Activated CD4-positive, alpha-beta T cell treated with anti-CD3 and anti-CD28 coated beads for 36 hours (primary cell): ENCODE measurements at regions of chrX and their contacts with region 1.

Region 1: GRCh38 chrX:39772057-39772832 is 325.5 kb downstream of the BCOR start:
- DNase-seq: peak; percentile 84
- ATAC-seq: peak; percentile 71
- H3K4me3 Mint-ChIP-seq: peak overlapping the region; percentile 39
- H3K27ac Mint-ChIP-seq: peak overlapping the region; percentile 94
- H3K4me1 Mint-ChIP-seq: peaks cover 42% of the 10 kb centered on the region
- H3K27me3 Mint-ChIP-seq: no peaks in the 10 kb centered on the region

Region 2: GRCh38 chrX:39320165-39320564 is 452.1 kb before region 1 on chrX:
- CTCF ChIA-PET with region 1: no interaction called
- POLR2A ChIA-PET with region 1: no interaction called
- intact Hi-C with region 1: loop called in 1 of 2 experiments (anchors 5 kb)
- DNase-seq: no peak
- ATAC-seq: peak; percentile 70
- H3K4me3 Mint-ChIP-seq: no peak overlapping the region
- H3K27ac Mint-ChIP-seq: peak overlapping the region; percentile 67
- H3K4me1 Mint-ChIP-seq: peaks cover 65% of the 10 kb centered on the region
- H3K27me3 Mint-ChIP-seq: no peaks in the 10 kb centered on the region

Region 3: GRCh38 chrX:39613482-39613921 is 158.7 kb before region 1 on chrX:
- CTCF ChIA-PET with region 1: no interaction called
- POLR2A ChIA-PET with region 1: no interaction called
- intact Hi-C with region 1: loop called in 1 of 2 experiments (anchors 2 kb)
- DNase-seq: peak; percentile 47
- ATAC-seq: peak; percentile 30
- H3K4me3 Mint-ChIP-seq: peak overlapping the region; percentile 77
- H3K27ac Mint-ChIP-seq: peak overlapping the region; percentile 89
- H3K4me1 Mint-ChIP-seq: peaks cover 33% of the 10 kb centered on the region
- H3K27me3 Mint-ChIP-seq: no peaks in the 10 kb centered on the region

Region 4: DNA sequence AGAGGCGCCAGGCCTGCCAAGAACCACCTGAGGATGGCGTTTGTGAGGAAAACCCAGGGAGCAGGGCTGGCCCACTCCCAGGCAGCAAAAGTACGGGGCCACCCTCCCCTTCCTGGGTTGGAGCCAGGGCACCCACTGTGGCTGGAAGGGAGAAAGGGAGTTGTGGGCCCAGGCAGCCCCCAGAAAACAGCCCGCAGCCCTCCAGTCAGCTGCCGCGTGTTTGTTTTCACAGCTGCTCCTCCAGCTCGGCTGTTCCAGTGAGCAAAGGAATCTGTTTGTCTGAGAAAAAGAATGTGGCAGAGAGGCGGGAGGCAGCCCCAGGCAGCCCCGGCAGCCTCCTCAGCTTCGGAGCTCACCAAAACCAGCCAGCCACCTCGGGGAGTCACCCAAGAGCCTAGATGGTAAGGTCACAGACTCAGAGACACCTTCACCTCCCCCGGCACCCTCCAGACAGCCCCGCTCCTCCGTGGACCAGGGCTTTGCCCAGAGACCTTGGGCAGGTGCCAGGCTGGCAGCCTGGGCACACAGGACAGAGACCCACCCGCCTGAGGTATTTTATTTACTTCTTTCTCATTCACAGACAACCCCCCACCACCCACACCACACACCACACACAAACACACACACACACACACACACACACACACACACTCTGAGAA is 12.6 kb before region 1 on chrX:
- CTCF ChIA-PET with region 1: no interaction called
- POLR2A ChIA-PET with region 1: no interaction called
- intact Hi-C with region 1: loop called in 1 of 2 experiments (anchors 2 kb)
- DNase-seq: no peak
- ATAC-seq: no peak
- H3K4me3 Mint-ChIP-seq: no peak overlapping the region
- H3K27ac Mint-ChIP-seq: no peak overlapping the region
- H3K4me1 Mint-ChIP-seq: peaks cover 18% of the 10 kb centered on the region
- H3K27me3 Mint-ChIP-seq: no peaks in the 10 kb centered on the region

Region 5: DNA sequence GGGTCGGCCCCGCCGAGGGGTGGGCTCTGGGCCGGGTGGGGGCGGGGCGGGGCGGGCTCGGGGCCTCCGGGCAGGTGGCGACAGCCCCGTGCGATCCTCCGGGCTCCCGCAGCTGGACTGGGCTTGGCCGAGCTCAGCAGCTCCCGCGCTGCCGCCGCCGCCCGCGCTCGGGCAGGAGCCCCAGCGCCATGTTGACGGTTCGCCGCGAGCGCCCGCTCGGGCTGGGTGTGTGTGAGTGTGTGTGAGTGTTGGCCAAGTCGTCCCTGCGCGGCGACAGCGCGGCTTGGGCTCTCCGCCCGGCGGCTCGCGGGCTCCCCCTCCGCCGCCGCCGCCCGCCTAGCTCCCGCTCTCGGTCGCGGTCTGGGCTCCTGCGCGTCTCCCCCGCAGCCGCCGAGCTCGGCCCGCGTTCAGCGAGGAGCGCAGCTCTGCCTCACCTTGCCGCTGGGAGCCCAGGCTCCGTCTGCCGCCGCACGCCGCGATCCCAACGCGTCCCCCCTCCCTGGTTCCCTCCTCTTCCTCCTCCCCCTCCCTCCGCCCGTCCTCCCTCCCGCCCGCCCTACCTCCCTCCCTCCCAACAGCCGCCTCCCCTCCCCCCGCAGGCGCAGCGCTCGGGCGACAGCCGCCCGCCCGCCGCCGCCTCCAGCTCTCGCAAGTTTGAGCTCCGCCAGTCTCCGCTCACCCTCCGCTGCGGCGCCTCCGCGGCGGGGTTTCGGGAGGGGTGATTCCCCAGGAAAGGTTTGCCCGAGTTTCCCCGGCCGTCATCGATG is 325.4 kb after region 1 on chrX and contains the start of gene BCOR:
- CTCF ChIA-PET with region 1: no interaction called
- POLR2A ChIA-PET with region 1: no interaction called
- intact Hi-C with region 1: loop called in 1 of 2 experiments (anchors 1 kb)
- DNase-seq: peak; percentile 88
- ATAC-seq: peak; percentile 40
- H3K4me3 Mint-ChIP-seq: peak within 1 kb of the TSS; percentile 86
- H3K27ac Mint-ChIP-seq: peak within 1 kb of the TSS; percentile 77
- H3K4me1 Mint-ChIP-seq: peaks cover 22% of the 10 kb centered on the region
- H3K27me3 Mint-ChIP-seq: no peaks in the 10 kb centered on the region
- total RNA-seq, gene BCOR: 34.7 to 51.1 TPM

Region 6: DNA sequence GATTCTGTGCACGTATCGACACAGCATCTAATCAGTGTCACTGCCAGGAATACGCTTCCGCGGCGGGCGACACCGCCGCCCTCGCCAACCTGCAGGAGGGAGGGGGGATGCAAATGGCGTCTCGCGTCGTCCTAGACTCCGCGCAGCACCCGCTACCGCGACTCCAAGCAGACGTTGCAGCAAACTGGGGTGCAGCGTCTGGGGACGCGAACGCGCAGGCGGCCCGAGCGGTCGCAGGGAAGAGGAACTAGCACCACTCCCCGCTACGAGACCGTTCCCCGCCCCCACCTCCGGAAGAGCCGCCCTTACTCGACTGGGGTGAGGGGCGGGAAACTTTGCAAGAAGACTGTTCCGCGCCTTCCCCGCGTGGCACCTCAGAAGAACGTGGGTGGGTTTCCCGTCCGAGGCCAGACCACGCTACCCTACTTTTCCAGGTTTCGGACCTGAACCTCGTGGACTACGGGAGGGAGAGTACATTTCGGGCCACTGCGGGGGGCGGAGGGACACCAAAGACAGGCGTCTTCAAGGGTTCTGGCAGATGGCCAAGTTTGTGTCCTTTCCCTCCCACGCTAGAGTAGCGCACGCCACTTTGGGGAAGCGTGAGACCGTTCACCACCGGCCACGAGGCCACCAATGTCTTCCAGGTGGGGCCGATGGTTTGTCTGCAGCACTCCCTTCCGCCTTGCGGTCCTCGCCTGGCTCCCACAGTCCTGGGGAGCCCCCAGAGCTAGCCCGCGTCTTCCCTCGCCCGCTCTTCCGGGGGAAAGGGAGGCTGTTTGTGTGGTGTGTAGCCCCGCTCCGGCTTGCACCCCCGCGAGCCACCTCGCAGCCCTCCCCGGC is 403.5 kb after region 1 on chrX:
- CTCF ChIA-PET with region 1: no interaction called
- POLR2A ChIA-PET with region 1: no interaction called
- intact Hi-C with region 1: loop called (anchors 1 to 5 kb)
- DNase-seq: peak; percentile 84
- ATAC-seq: peak; percentile 37
- H3K4me3 Mint-ChIP-seq: peak overlapping the region; percentile 80
- H3K27ac Mint-ChIP-seq: peak overlapping the region; percentile 99
- H3K4me1 Mint-ChIP-seq: peaks cover 25% of the 10 kb centered on the region
- H3K27me3 Mint-ChIP-seq: no peaks in the 10 kb centered on the region